ENCODE measurements at regions of chr3 and their contacts with region 1.

Region 1: GRCh38 chr3:66394019-66394752 is 106.6 kb downstream of the LRIG1 start:
- DNase-seq: peak; percentile 74 to 83 (median 81)
- H3K4me3 ChIP-seq: peak overlapping the region; percentile 44 to 49
- H3K4me3 Mint-ChIP-seq: peak overlapping the region; percentile 75 to 94 (median 90)
- H3K27ac ChIP-seq: peak overlapping the region; percentile 45
- H3K27ac Mint-ChIP-seq: peak overlapping the region; percentile 90 to 99 (median 97)
- H3K4me1 ChIP-seq: peaks cover 59% of the 10 kb centered on the region
- H3K4me1 Mint-ChIP-seq: peaks cover 50 to 61% (median 56%) of the 10 kb centered on the region in 4 donors
- H3K27me3 ChIP-seq: no peaks in the 10 kb centered on the region
- H3K27me3 Mint-ChIP-seq: no peaks in the 10 kb centered on the region

Region 2: GRCh38 chr3:66220602-66221377 is 173.4 kb before region 1 on chr3 and contains the start of gene SLC25A26:
- CTCF ChIA-PET with region 1: no interaction called
- POLR2A ChIA-PET with region 1: interaction called, 5 read pairs
- intact Hi-C with region 1: loop called (anchors 1 kb)
- DNase-seq: peak; percentile 96 to 100 (median 98)
- H3K4me3 ChIP-seq: peak within 1 kb of the TSS; percentile 67 to 82
- H3K4me3 Mint-ChIP-seq: peak within 1 kb of the TSS; percentile 87 to 99 (median 92)
- H3K27ac ChIP-seq: peak within 1 kb of the TSS; percentile 73
- H3K27ac Mint-ChIP-seq: peak within 1 kb of the TSS; percentile 76 to 99 (median 91)
- H3K4me1 ChIP-seq: peaks cover 15% of the 10 kb centered on the region
- H3K4me1 Mint-ChIP-seq: peaks cover 16 to 44% (median 32%) of the 10 kb centered on the region in 4 donors
- H3K27me3 ChIP-seq: no peaks in the 10 kb centered on the region
- H3K27me3 Mint-ChIP-seq: no peaks in the 10 kb centered on the region
- total RNA-seq, gene SLC25A26: 18.9 to 21.1 TPM

Region 3: GRCh38 chr3:66276705-66277274 is 117.4 kb before region 1 on chr3:
- CTCF ChIA-PET with region 1: interaction called, 10 read pairs
- POLR2A ChIA-PET with region 1: interaction called, 7 read pairs
- intact Hi-C with region 1: loop called (anchors 1 kb)
- DNase-seq: peak; percentile 71 to 75 (median 73)
- H3K4me3 ChIP-seq: no peak overlapping the region
- H3K4me3 Mint-ChIP-seq: no peak overlapping the region
- H3K27ac ChIP-seq: no peak overlapping the region
- H3K27ac Mint-ChIP-seq: peak overlapping the region; percentile 6 to 86 (median 71)
- H3K4me1 ChIP-seq: peaks cover 34% of the 10 kb centered on the region
- H3K4me1 Mint-ChIP-seq: peaks cover 25 to 45% (median 34%) of the 10 kb centered on the region in 4 donors
- H3K27me3 ChIP-seq: no peaks in the 10 kb centered on the region
- H3K27me3 Mint-ChIP-seq: no peaks in the 10 kb centered on the region

Region 4: DNA sequence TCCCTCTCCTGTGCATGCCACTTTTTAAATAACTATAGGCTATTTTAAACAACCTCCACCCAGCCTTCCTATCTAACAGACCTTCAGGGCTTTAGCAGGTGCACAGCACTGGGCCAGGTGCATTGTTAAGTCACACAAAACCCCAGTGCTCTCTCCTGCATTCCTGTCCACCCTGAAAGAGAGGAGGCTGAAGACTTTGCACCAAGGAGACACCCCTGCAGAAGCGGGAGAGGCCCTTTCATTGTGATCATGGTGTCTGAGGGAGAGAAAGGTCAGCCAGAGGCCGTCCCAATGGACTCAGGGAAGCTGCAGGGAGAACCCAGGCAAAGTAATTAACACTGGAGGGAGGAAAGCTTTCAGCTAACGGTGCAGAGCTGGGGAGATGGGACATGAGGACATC is 101.5 kb after region 1 on chr3:
- CTCF ChIA-PET with region 1: no interaction called
- POLR2A ChIA-PET with region 1: interaction called, 12 read pairs
- intact Hi-C with region 1: loop called (anchors 5 kb)
- DNase-seq: no peak
- H3K4me3 ChIP-seq: no peak overlapping the region
- H3K4me3 Mint-ChIP-seq: peak overlapping the region in 7 of 8 donors; percentile 51 to 99 (median 75)
- H3K27ac ChIP-seq: no peak overlapping the region
- H3K27ac Mint-ChIP-seq: peak overlapping the region; percentile 34 to 87 (median 67)
- H3K4me1 ChIP-seq: peaks cover 87% of the 10 kb centered on the region
- H3K4me1 Mint-ChIP-seq: peaks cover 72 to 94% (median 81%) of the 10 kb centered on the region in 4 donors
- H3K27me3 ChIP-seq: no peaks in the 10 kb centered on the region
- H3K27me3 Mint-ChIP-seq: no peaks in the 10 kb centered on the region

Region 5: DNA sequence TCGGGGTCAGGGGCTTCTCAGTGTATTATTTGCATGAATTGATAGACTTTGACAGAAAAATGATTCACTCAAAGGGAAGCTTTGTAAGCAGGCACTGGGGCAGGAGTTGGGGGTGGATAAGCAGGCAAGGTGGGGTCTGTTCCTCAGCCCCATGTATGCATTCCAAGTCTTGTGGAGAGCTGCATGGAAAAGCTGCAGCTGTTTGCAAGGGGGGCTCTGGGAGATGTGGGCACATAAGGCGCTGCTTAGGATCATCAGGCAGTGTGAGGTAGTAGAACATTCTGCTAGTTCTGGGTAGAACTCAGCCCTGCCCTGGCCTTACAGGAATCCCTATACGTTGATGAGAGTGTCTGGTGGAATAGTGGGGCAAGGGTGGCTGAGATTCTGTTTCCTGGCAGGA is 260.9 kb after region 1 on chr3:
- CTCF ChIA-PET with region 1: no interaction called
- POLR2A ChIA-PET with region 1: no interaction called
- intact Hi-C with region 1: no loop called
- DNase-seq: no peak
- H3K4me3 ChIP-seq: no peak overlapping the region
- H3K4me3 Mint-ChIP-seq: no peak overlapping the region
- H3K27ac ChIP-seq: no peak overlapping the region
- H3K27ac Mint-ChIP-seq: peak overlapping the region in 1 of 7 donors; percentile 25
- H3K4me1 ChIP-seq: no peaks in the 10 kb centered on the region
- H3K4me1 Mint-ChIP-seq: no peaks in the 10 kb centered on the region
- H3K27me3 ChIP-seq: no peaks in the 10 kb centered on the region
- H3K27me3 Mint-ChIP-seq: peaks cover 1 to 3% of the 10 kb centered on the region in 2 donors

Region 6: GRCh38 chr3:66822186-66823008 is 428.2 kb after region 1 on chr3:
- CTCF ChIA-PET with region 1: interaction called, 16 read pairs
- POLR2A ChIA-PET with region 1: no interaction called
- intact Hi-C with region 1: loop called (anchors 5 kb)
- DNase-seq: peak; percentile 60 to 73 (median 64)
- H3K4me3 ChIP-seq: no peak overlapping the region
- H3K4me3 Mint-ChIP-seq: no peak overlapping the region
- H3K27ac ChIP-seq: no peak overlapping the region
- H3K27ac Mint-ChIP-seq: no peak overlapping the region
- H3K4me1 ChIP-seq: no peaks in the 10 kb centered on the region
- H3K4me1 Mint-ChIP-seq: peaks cover 0 to 2% (median 0%) of the 10 kb centered on the region in 4 donors
- H3K27me3 ChIP-seq: no peaks in the 10 kb centered on the region
- H3K27me3 Mint-ChIP-seq: peaks cover 0 to 4% of the 10 kb centered on the region in 2 donors